HEK293 (cell line): ENCODE measurements at regions of chr1 and their contacts with region 1.

Region 1: DNA sequence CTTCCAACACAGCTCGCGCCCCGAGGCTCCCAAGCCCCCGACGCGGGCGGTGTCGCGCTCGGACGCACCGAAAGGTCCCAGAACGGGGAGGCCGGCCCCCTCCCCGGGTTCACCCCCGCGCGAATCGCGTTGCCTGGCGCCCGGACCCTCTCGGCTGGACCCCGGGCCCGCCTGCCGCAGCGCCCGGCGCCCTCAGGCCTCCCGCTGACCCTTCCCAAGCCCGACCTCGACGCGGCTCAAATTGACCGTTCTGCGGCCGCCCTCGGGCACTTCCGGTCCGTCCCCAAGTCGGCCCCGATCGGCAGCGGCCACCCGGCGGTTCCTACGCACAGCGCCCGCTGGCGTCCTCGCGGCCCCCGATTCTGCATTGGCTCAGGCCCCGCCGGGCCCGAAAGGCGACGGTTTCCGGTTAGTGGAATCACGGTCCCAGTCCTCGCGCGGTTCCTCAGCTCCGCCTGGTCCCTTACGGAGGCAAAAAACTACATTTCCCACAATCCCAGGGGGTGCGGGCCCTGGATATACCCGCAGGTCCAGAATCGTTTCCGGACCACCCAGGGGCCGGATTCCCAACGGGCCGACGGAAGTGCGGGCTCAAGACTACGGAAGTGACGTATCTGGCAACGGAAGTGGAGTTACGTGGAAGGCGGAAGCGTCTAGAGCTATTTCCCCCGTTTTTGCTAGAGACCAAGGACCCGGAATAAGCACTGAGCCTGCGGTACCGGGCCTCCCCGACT is at the start of gene AURKAIP1:
- H3K4me3 ChIP-seq: peak within 1 kb of the TSS; percentile 93
- H3K27ac ChIP-seq: peak within 1 kb of the TSS; percentile 89
- H3K4me1 ChIP-seq: peaks cover 4% of the 10 kb centered on the region; the same call in 1 of the 2 replicates
- CTCF ChIP-seq: peak; percentile 99

Region 2: DNA sequence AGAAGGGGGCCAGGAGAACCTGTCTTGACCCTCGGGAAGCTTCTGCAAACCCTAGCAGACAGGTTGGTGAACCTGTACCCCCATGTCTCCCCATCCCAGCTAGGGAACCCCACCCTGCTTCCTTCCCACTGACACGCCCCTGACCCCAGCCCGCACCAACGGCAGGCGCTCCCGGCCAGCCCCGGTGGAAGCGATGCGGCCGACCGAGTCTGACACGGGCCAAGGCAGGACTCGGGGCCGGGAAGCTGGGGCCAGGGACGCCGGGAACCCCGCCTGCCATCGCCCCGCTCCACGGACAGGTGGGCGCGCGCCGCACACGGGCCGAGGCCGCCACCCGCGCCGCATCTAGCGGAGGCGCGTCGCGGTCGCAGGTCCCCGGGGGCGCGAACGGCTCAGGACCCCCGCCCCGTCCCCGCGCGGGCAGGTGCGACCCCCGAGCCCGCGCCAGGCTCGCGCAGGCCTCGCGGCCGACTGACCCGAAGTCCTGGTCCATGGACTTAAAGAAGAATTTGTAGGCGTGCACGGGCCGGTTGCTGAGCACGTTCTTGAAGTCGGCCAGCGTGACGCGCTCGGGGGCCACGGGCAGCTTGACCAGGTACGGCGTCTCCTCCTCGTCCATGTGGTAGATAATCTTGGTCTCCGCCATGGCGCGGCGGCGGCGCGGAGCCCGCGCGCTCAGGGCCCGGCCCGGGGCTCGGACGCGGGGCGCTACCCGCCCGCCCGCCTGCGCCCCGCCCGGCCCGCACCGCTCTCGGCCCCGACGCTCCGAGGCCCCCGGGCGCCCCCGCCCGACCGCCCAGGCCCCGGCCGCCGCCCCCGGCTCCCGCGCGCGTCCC is 26.5 kb before region 1 on chr1:
- CTCF ChIA-PET with region 1: interaction called, 18 read pairs
- POLR2A ChIA-PET with region 1: interaction called, 8 read pairs
- H3K4me3 ChIP-seq: peak overlapping the region; percentile 64
- H3K27ac ChIP-seq: peak overlapping the region; percentile 87
- H3K4me1 ChIP-seq: peaks cover 10% of the 10 kb centered on the region
- CTCF ChIP-seq: no peak

Region 3: DNA sequence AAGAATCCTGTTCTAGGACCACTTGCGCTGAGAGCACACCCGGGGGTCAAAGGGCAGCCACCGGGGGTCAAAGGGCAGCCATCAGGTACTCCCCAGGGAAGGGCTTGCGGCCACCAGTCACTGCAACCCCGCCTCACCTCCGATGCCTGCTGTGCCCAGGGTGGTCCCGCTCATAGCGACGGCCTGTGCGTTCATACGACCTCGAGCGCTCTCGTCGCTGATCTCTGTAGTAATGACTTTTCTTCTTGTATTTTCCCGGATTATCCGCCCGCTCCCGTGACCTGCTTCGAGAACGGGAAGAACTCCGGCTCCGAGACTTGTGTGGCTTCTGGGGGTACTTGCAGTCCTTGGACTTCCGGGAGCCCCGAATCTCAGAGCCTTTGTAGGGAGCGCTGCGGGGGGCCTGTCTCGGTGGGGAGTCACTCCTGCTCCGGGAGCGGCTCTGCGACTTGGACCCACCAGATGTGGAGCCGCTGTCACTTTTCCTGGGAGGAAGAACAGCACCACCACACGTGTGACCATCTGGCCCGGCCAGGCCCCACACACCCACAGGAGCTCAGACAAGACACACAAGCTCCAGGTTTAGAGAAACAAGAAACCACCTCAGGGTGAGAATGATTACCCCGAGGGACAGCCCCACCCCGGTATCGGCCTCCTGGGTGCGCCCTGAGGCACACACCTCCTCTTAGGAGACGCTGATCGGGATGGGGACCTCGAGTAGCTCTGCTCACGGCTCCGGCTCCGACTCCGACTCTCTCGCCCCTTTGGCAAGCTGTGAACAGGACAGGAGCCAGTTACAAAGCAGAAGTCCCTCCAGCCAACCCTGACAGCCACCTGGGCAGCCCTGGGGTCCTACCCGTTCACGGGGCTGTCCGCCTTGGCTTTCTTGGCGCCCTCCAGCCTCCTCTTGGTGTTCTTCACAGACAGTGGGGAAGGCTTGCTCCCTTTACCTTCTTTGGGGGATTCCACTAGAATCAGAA is 12.3 kb after region 1 on chr1:
- CTCF ChIA-PET with region 1: interaction called, 9 read pairs
- POLR2A ChIA-PET with region 1: interaction called, 12 read pairs
- H3K4me3 ChIP-seq: no peak overlapping the region
- H3K27ac ChIP-seq: no peak overlapping the region
- H3K4me1 ChIP-seq: no peaks in the 10 kb centered on the region
- CTCF ChIP-seq: no peak

Region 4: DNA sequence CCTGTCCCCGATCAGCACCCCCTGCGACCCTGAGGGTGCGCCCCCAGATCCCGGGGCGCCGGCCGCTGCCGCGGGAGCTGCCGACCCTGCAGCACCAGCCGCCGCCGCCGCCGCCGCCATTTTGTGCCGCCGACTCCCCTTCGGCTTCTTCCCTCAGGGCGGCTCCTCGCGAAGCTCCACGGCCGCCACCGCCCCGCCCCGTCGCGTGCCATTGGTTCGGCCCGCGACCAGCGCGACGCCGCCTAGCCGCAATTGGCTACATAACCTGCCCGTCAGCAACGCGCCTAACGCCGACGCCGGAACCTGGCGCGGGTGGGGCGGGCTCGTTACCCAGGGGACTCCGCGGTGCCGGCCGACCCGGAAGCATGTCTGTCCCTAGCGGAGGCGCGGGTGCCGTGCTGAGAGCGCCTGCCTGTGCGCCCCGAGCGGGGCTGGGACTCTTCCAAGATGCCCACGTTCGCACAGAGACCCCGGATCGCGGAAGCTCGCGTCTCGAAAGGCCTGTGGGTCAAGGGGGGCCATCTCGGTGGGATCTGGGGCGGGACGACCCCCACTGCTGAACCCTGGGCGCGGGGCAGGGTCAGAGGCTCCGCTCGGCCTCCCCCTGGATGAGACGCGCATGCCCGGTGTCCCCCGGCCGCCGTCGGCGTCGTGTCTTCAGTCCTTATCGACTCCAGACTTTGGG is 24.2 kb after region 1 on chr1 and contains the start of gene CCNL2:
- CTCF ChIA-PET with region 1: interaction called, 5 read pairs
- POLR2A ChIA-PET with region 1: interaction called, 36 read pairs
- H3K4me3 ChIP-seq: peak within 1 kb of the TSS; percentile 95
- H3K27ac ChIP-seq: peak within 1 kb of the TSS; percentile 89
- H3K4me1 ChIP-seq: no peaks in the 10 kb centered on the region
- CTCF ChIP-seq: peak; percentile 93

Region 5: GRCh38 chr1:1406817-1407635 is 31.9 kb after region 1 on chr1 and contains the start of gene MRPL20:
- CTCF ChIA-PET with region 1: interaction called, 4 read pairs
- POLR2A ChIA-PET with region 1: interaction called, 14 read pairs
- H3K4me3 ChIP-seq: peak within 1 kb of the TSS; percentile 84
- H3K27ac ChIP-seq: peak within 1 kb of the TSS; percentile 87
- H3K4me1 ChIP-seq: no peaks in the 10 kb centered on the region
- CTCF ChIP-seq: no peak